Dorsolateral prefrontal cortex (tissue), 120 donors: ENCODE measurements at regions of chr7 and their contacts with region 1.

Region 1: DNA sequence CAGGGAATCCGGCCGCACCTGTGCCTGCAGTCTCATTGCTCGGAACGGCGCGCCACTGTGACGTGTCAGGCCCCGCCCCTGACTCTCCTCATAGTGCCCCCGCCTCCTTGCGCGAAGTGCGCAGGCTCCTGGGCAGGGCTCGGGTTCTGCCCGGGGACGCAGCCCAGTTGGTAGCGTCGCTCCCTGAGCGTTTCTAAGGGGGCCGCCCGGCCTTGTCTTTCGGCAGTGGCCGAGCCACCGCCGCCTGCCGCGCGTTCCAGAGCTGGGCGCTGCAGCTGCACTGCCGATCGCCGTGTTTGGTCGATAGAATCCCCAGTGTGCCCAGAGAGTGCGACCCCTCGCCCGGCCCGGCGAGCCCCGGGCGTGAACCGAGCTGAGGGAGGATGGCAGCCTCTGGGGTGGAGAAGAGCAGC is at the start of gene KLHL7:
- DNase-seq: peak; percentile 95 to 98 (median 98)
- H3K4me3 ChIP-seq: peak within 1 kb of the TSS; percentile 74 to 99 (median 95)
- H3K27ac ChIP-seq: peak within 1 kb of the TSS in 58 of 59 donors; percentile 47 to 97 (median 89)
- H3K27me3 ChIP-seq: no peaks in the 10 kb centered on the region
- CTCF ChIP-seq: peak in 26 of 56 donors; percentile 10 to 49 (median 26)
- total RNA-seq, gene KLHL7: 25.2 to 72.8 (median 49.2) TPM

Region 2: DNA sequence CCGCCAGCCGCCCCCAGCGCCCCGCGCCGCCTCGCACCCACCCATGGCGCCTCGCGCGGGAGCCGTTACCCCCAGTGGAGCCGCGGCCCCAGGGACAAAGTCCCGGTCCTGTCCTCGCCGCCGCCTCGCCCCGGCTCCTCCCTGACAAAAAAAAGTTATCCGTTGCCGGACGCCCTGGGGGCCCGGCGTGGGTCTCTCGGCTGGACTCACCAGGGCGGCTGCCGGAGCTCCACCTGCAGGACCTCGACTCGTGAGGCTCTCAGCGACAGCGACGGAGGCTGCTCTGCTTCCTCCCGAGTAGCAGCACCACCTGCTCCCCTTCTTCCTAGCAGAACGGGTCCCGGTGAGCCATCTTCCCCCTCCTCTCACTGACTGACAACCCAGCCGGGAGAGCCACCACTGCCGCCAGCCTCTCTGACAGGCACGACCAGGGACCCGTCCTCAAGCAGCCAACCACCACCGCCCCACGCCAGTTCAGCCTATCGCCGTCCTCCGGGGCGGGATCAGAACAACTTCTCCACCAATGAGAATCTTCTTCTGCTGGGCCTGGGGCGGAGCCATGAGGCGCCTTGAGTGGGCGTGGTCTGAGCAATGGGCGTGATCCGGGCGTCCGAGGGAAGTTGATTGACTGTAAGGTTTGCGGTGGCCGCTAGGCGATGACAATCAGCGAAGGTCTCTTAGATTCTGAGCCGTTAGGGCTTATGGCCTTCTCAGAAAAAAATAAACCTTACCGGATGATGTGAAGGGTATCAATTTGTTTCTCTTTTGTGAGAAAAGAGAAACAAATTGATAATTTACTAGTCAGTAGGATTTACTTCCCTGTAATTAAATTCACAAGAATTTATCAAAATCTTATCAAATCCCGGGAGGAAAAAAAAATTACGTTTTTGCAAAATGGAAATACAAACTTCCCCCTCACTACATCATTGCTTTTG is 91.7 kb before region 1 on chr7 and contains the start of gene HYCC1:
- intact Hi-C with region 1: loop called in 1 of 2 experiments (anchors 5 kb)
- DNase-seq: peak; percentile 88 to 100 (median 99)
- H3K4me3 ChIP-seq: peak within 1 kb of the TSS; percentile 58 to 96 (median 83)
- H3K27ac ChIP-seq: peak within 1 kb of the TSS in 55 of 59 donors; percentile 4 to 89 (median 70)
- H3K27me3 ChIP-seq: no peaks in the 10 kb centered on the region
- CTCF ChIP-seq: peak; percentile 36 to 85 (median 73)
- total RNA-seq, gene HYCC1: 14.8 to 47.6 (median 26.6) TPM

Region 3: DNA sequence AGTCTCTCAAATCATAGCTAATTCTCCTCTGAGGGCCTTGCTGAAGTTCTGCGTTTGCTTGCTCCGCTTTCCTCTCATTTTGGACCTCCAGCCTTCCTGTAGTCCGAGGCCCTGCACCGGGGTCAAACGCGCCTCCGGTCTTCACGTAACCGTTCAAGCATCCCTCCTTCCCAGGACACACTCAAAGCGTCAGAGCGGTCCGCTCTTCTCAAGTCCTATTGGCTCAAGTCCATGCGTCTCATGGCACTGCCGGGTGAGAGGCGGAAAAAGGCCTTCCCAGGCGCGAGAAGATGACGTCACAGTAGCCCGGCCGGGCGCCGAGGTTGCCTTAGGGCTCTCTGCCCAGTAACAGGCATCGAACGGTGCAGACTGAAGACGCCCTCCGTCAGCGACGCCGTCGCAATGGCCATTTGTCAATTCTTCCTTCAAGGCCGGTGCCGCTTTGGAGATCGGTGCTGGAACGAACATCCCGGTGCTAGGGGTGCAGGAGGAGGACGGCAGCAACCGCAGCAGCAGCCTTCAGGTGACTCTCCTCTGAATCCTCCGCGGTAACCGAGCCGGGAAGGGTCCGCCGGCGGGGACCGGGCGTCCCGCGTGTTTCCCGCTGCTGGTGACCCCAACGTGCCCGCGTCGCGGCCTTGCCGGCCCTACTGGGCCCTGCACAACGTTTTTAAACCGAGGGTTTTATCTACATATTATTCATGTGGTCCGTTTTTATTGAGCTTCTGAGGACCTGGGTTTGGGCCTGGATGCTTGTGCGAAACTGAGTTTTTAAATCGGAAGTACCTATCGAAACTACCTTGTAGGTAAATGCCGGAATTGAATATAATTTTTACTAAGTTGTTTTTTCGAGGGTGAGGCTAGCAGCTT is 76.3 kb after region 1 on chr7 and contains the start of gene NUP42:
- intact Hi-C with region 1: loop called (anchors 2 kb)
- DNase-seq: peak; percentile 86 to 94 (median 92)
- H3K4me3 ChIP-seq: peak within 1 kb of the TSS; percentile 64 to 100 (median 90)
- H3K27ac ChIP-seq: peak within 1 kb of the TSS; percentile 42 to 98 (median 89)
- H3K27me3 ChIP-seq: no peaks in the 10 kb centered on the region
- CTCF ChIP-seq: peak in 37 of 56 donors; percentile 13 to 59 (median 24)
- total RNA-seq, gene NUP42: 26.1 to 58.3 (median 39.5) TPM

Region 4: GRCh38 chr7:23216021-23216420 is 110.4 kb after region 1 on chr7:
- intact Hi-C with region 1: no loop called
- DNase-seq: peak in 4 of 10 donors; percentile 11 to 55 (median 40)
- H3K4me3 ChIP-seq: no peak overlapping the region
- H3K27ac ChIP-seq: peak overlapping the region in 24 of 59 donors; percentile 3 to 74 (median 38)
- H3K27me3 ChIP-seq: peaks cover 0 to 2% (median 0%) of the 10 kb centered on the region in 45 donors
- CTCF ChIP-seq: no peak

Region 5: GRCh38 chr7:23298885-23299769 is 193.5 kb after region 1 on chr7 and contains the start of gene MALSU1:
- intact Hi-C with region 1: loop called (anchors 10 kb)
- DNase-seq: peak; percentile 96 to 99 (median 98)
- H3K4me3 ChIP-seq: peak within 1 kb of the TSS; percentile 57 to 99 (median 92)
- H3K27ac ChIP-seq: peak within 1 kb of the TSS in 56 of 59 donors; percentile 3 to 89 (median 78)
- H3K27me3 ChIP-seq: no peaks in the 10 kb centered on the region
- CTCF ChIP-seq: peak in 30 of 56 donors; percentile 7 to 53 (median 24)
- total RNA-seq, gene MALSU1: 27.0 to 68.5 (median 47.7) TPM

Region 6: DNA sequence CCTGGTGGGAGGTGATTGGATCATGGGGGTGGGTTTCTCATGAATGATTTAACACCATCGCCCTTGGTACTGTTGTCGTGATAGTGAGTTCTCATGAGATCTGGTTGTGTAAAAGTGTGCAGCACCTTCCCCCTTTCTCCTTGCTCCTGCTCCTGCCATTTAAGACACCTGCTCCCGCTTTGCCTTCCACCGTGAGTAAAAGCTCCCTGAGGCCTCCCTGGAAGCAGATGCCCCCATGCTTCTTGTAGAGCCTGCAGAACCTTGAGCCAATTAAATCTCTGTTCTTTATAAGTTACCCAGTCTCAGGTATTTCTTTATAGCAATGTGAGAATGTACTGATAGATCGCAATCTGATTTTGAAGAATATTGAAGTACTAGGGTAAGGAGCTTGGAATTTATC is 892.3 kb after region 1 on chr7:
- intact Hi-C with region 1: no loop called
- DNase-seq: no peak
- H3K4me3 ChIP-seq: no peak overlapping the region
- H3K27ac ChIP-seq: no peak overlapping the region
- H3K27me3 ChIP-seq: no peaks in the 10 kb centered on the region
- CTCF ChIP-seq: no peak